ENCODE measurements at regions of chr12 and their contacts with region 1.

Region 1: DNA sequence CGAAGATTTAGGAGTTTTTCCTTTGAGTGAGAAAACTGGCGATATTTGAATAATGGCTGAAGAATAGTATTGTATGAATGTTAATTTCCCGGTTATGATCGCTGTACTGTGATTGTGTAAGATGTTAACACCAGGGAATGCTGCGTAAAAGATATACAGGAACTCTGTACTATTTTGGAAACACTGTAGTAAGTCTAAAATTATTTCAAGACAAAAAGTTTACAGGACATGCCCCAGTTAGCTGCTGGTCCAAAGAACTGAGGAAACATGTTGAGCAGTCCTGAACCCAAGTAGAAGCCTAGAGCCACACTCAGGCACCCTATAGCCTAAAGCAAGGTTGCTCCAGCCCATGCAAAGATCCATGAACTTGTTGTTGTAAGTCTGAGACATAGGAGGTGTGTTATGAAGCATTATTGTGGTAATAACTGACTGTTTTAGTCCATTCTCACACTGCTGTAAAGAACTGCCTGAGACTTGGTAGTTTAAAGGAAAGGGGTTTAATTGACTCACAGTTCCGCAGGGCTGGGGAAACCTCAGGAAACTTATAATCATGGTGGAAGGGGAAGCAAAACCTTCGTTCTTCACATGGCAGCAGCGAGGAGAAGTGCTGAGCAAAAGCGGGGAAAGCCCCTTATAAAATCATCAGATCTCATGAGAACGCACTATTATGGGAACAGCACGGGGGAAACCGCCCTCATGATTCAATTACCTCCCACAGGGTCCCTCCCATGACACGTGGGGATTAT is 99.8 kb upstream of the RESF1 start:
- DNase-seq: no peak
- H3K4me3 ChIP-seq: no peak overlapping the region
- H3K4me3 Mint-ChIP-seq: peak overlapping the region in 1 of 7 donors; percentile 36
- H3K27ac ChIP-seq: no peak overlapping the region
- H3K27ac Mint-ChIP-seq: peak overlapping the region in 3 of 8 donors; percentile 3 to 73 (median 19)
- H3K4me1 ChIP-seq: no peaks in the 10 kb centered on the region
- H3K4me1 Mint-ChIP-seq: peaks cover 1 to 10% (median 9%) of the 10 kb centered on the region in 3 donors
- H3K27me3 ChIP-seq: no peaks in the 10 kb centered on the region
- H3K27me3 Mint-ChIP-seq: no peaks in the 10 kb centered on the region

Region 2: GRCh38 chr12:31845613-31846415 is 13.6 kb before region 1 on chr12:
- CTCF ChIA-PET with region 1: no interaction called
- POLR2A ChIA-PET with region 1: interaction called, 10 read pairs
- DNase-seq: no peak
- H3K4me3 ChIP-seq: no peak overlapping the region
- H3K4me3 Mint-ChIP-seq: no peak overlapping the region
- H3K27ac ChIP-seq: no peak overlapping the region
- H3K27ac Mint-ChIP-seq: no peak overlapping the region
- H3K4me1 ChIP-seq: no peaks in the 10 kb centered on the region
- H3K4me1 Mint-ChIP-seq: peaks cover 0 to 6% (median 4%) of the 10 kb centered on the region in 3 donors
- H3K27me3 ChIP-seq: no peaks in the 10 kb centered on the region
- H3K27me3 Mint-ChIP-seq: no peaks in the 10 kb centered on the region

Region 3: DNA sequence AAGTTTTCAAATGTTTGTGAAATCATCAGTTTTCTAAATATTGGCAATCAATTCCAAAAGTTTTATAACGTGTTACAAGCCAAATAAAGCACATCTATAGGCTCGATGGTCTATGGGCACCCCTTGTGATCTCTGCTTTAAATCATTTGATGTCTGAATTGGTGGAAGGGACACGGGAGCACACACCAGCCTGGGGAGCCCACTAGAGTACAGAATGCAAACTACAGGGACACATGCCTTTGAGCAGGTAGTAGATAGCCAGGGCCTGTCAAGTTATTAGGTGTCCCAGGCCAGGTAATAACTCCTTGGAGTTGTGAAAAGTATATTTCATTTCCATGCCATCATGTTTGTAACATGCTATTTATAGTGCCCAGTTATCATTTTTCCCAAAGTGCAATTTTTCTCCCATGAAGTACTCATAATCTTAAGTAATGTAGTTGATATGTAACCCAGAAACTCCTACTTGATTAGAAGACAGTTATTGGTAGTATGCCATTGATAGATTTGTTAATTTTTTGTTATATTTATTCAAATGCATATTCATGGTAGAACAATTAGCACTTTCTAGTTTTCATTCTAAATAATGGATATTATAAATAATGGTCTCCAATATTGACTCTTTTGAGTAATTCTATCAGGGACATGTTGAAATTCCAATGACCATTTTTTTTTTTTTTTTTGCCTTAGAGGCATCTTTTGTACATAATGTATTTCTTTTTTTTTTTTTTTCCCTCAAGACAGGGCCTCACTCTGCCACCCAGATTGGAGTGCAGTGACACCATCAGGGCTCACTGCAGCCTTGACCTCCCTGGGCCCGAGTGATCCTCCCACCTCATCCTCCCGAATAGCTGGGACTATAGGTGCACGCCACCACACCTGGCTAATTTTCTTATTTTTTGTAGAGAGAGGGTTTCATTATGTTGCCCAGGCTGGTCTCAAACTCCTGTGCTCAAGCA is 443.1 kb after region 1 on chr12:
- CTCF ChIA-PET with region 1: no interaction called
- POLR2A ChIA-PET with region 1: no interaction called
- DNase-seq: peak in 2 of 5 donors; percentile 5
- H3K4me3 ChIP-seq: no peak overlapping the region
- H3K4me3 Mint-ChIP-seq: no peak overlapping the region
- H3K27ac ChIP-seq: no peak overlapping the region
- H3K27ac Mint-ChIP-seq: no peak overlapping the region
- H3K4me1 ChIP-seq: no peaks in the 10 kb centered on the region
- H3K4me1 Mint-ChIP-seq: no peaks in the 10 kb centered on the region
- H3K27me3 ChIP-seq: no peaks in the 10 kb centered on the region
- H3K27me3 Mint-ChIP-seq: no peaks in the 10 kb centered on the region